Esophagus muscularis mucosa (tissue), 4 donors: ENCODE measurements at regions of chr10 and their contacts with region 1.

Region 1: DNA sequence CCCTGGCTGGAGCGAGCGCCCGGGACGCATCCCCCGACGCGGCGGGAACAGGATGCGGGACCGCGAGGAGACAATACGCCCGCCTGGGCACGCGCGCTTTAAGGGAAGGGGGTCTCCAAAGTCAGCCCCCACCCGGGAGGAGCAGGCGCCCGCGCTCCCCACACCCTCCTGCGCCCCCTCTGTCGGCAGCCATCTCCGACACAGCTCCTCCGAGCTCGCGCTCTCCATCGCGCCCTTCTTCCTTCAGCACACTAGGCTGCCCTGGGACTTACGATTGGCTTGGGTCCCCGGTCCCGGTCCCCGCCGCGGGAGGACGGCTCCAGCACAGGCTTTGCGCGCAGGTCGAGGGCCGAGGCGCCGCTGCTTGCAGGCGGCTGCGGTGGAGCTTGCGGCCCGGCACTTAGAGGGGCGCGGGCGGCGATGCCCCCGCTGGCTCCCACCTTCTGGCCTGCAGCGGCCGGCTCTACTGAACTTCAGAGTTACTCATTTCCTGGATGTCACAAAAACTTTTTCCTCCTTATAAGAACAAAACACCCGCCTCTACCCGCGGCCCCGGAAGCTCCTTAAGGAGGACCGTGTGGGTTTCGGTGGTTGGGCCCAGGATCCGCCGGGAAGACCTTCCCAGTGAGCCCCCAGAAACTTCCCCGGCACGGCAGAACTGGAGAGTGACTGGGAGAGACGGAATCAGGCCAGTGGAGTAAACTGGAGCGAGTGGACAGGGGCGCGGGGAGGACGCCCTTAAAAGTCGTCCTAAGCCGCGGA is at the start of gene ITPRIP:
- DNase-seq: peak; percentile 96
- H3K4me3 ChIP-seq: peak within 1 kb of the TSS; percentile 77 to 98 (median 90)
- H3K27ac ChIP-seq: peak within 1 kb of the TSS; percentile 97 to 100 (median 98)
- H3K4me1 ChIP-seq: peaks cover 51 to 65% (median 62%) of the 10 kb centered on the region in 4 donors
- H3K27me3 ChIP-seq: no peaks in the 10 kb centered on the region
- CTCF ChIP-seq: peak in 1 of 3 experiments; percentile 2
- EP300 ChIP-seq: no peak
- POLR2A ChIP-seq: peak; percentile 95
- total RNA-seq, gene ITPRIP: 18.7 to 56.0 (median 39.9) TPM

Region 2: DNA sequence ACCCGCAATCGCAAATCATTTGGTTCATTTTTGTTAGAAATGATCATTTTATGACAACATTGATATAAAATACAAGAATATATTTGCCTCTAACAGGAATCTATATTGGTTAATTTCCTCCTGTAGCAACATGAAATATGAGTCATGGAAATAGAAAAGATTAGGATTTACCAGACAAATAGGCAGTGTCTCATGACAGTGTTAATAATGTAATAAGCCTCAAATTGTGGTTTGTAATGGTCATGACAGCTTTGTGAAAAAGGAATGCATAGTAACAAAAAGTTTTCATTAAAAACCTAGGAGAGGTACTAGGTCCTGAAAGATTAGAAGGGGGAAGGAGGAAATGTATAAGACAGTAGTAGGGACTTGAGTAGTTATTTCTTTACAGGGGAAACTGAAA is 379.2 kb before region 1 on chr10:
- intact Hi-C with region 1: no loop called
- DNase-seq: no peak
- H3K4me3 ChIP-seq: no peak overlapping the region
- H3K27ac ChIP-seq: no peak overlapping the region
- H3K4me1 ChIP-seq: no peaks in the 10 kb centered on the region
- H3K27me3 ChIP-seq: no peaks in the 10 kb centered on the region
- CTCF ChIP-seq: no peak
- EP300 ChIP-seq: no peak
- POLR2A ChIP-seq: no peak

Region 3: GRCh38 chr10:104150139-104150538 is 188.0 kb before region 1 on chr10:
- intact Hi-C with region 1: no loop called
- DNase-seq: no peak
- H3K4me3 ChIP-seq: no peak overlapping the region
- H3K27ac ChIP-seq: no peak overlapping the region
- H3K4me1 ChIP-seq: no peaks in the 10 kb centered on the region
- H3K27me3 ChIP-seq: peaks cover 0 to 8% (median 0%) of the 10 kb centered on the region in 4 donors
- CTCF ChIP-seq: no peak
- EP300 ChIP-seq: no peak
- POLR2A ChIP-seq: no peak

Region 4: GRCh38 chr10:104301907-104302690 is 36.1 kb before region 1 on chr10:
- intact Hi-C with region 1: loop called (anchors 2 kb)
- DNase-seq: no peak
- H3K4me3 ChIP-seq: no peak overlapping the region
- H3K27ac ChIP-seq: peak overlapping the region; percentile 87 to 96 (median 90)
- H3K4me1 ChIP-seq: peaks cover 88 to 98% (median 95%) of the 10 kb centered on the region in 4 donors
- H3K27me3 ChIP-seq: no peaks in the 10 kb centered on the region
- CTCF ChIP-seq: peak in 1 of 3 experiments; percentile 4
- EP300 ChIP-seq: no peak
- POLR2A ChIP-seq: no peak